ENCODE measurements at regions of chr19 and their contacts with region 1.

Region 1: GRCh38 chr19:860481-861101 is 1.1 kb downstream of the CFD start:
- DNase-seq: peak; percentile 63
- ATAC-seq: peak; percentile 51
- H3K4me3 Mint-ChIP-seq: peak overlapping the region; percentile 28
- H3K27ac Mint-ChIP-seq: no peak overlapping the region
- H3K4me1 Mint-ChIP-seq: peaks cover 19% of the 10 kb centered on the region
- H3K27me3 Mint-ChIP-seq: peaks cover 8% of the 10 kb centered on the region
- CTCF ChIP-seq: no peak

Region 2: DNA sequence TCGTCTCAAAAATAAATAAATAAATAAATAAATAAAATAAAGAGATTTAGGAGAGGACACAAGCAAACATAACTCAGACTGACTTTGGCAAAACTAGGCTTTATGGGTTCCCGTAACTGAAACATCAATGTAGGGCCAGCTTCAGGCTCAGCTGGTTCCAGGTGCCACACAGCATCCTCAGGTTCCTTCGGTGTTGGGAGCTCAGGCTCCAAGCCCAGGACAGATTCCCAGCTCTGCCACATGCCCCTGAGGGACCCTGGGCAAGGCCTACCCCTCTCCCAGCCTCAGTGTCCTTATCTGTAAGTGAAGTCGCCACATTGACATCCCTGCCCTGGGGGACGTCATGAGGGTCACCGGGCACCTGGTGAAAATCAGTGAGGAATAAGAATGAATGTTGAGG is 91.0 kb before region 1 on chr19:
- CTCF ChIA-PET with region 1: no interaction called
- POLR2A ChIA-PET with region 1: no interaction called
- intact Hi-C with region 1: loop called (anchors 1 kb)
- DNase-seq: no peak
- ATAC-seq: no peak
- H3K4me3 Mint-ChIP-seq: no peak overlapping the region
- H3K27ac Mint-ChIP-seq: no peak overlapping the region
- H3K4me1 Mint-ChIP-seq: peaks cover 3% of the 10 kb centered on the region
- H3K27me3 Mint-ChIP-seq: peaks cover 11% of the 10 kb centered on the region
- CTCF ChIP-seq: no peak

Region 3: GRCh38 chr19:843180-843835 is 17.3 kb before region 1 on chr19:
- CTCF ChIA-PET with region 1: no interaction called
- POLR2A ChIA-PET with region 1: no interaction called
- intact Hi-C with region 1: no loop called
- DNase-seq: no peak
- ATAC-seq: no peak
- H3K4me3 Mint-ChIP-seq: no peak overlapping the region
- H3K27ac Mint-ChIP-seq: no peak overlapping the region
- H3K4me1 Mint-ChIP-seq: peaks cover 11% of the 10 kb centered on the region
- H3K27me3 Mint-ChIP-seq: peaks cover 40% of the 10 kb centered on the region
- CTCF ChIP-seq: no peak

Region 4: GRCh38 chr19:907183-907853 is 46.7 kb after region 1 on chr19:
- CTCF ChIA-PET with region 1: interaction called, 16 read pairs
- POLR2A ChIA-PET with region 1: interaction called, 52 read pairs
- intact Hi-C with region 1: no loop called
- DNase-seq: peak; percentile 70
- ATAC-seq: peak; percentile 49
- H3K4me3 Mint-ChIP-seq: peak overlapping the region; percentile 80
- H3K27ac Mint-ChIP-seq: peak overlapping the region; percentile 99
- H3K4me1 Mint-ChIP-seq: peaks cover 73% of the 10 kb centered on the region
- H3K27me3 Mint-ChIP-seq: no peaks in the 10 kb centered on the region
- CTCF ChIP-seq: no peak

Region 5: GRCh38 chr19:920051-920864 is 59.7 kb after region 1 on chr19:
- CTCF ChIA-PET with region 1: interaction called, 25 read pairs
- POLR2A ChIA-PET with region 1: interaction called, 20 read pairs
- intact Hi-C with region 1: loop called (anchors 1 kb)
- DNase-seq: peak; percentile 70
- ATAC-seq: peak; percentile 38
- H3K4me3 Mint-ChIP-seq: peak overlapping the region; percentile 72
- H3K27ac Mint-ChIP-seq: no peak overlapping the region
- H3K4me1 Mint-ChIP-seq: peaks cover 34% of the 10 kb centered on the region
- H3K27me3 Mint-ChIP-seq: no peaks in the 10 kb centered on the region
- CTCF ChIP-seq: no peak

Region 6: DNA sequence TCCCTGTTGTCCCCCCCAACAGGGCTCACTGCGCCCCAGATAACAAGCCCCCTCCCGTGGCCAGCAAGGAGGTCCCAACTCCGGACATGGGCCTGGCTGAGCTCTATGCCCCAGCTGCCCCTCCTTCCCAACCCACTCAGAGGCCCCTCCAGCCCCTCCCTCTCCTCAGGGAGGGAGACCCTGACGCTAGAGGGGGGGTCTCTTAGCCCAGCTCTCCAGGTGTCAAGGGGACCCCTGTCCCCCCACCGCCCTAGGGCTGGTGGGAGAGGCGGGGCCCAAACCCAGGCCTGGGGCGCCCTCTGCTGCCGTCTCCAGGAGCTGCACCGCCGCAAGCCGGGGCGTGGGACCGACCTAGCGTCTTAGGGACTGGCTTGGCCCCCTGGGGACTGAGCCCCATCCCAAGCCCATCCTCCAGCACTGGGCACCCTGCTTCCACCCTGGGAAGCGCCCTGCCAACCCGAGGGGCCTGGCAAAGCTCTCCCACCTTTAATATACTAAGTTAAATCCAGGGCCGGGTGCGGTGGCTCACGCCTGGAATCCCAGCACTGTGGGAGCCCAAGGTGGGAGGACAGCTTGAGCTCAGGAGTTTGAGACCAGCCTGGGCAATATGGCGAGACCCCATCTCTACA is 141.1 kb after region 1 on chr19:
- CTCF ChIA-PET with region 1: interaction called, 3 read pairs
- POLR2A ChIA-PET with region 1: interaction called, 4 read pairs
- intact Hi-C with region 1: loop called (anchors 2 kb)
- DNase-seq: peak; percentile 75
- ATAC-seq: peak; percentile 77
- H3K4me3 Mint-ChIP-seq: no peak overlapping the region
- H3K27ac Mint-ChIP-seq: no peak overlapping the region
- H3K4me1 Mint-ChIP-seq: peaks cover 13% of the 10 kb centered on the region
- H3K27me3 Mint-ChIP-seq: peaks cover 29% of the 10 kb centered on the region
- CTCF ChIP-seq: no peak